ENCODE measurements at regions of chr16 and their contacts with region 1.

Region 1: GRCh38 chr16:82192665-82193064 is 22.6 kb upstream of the MPHOSPH6 start:
- DNase-seq: no peak
- ATAC-seq: peak; percentile 61

Region 2: DNA sequence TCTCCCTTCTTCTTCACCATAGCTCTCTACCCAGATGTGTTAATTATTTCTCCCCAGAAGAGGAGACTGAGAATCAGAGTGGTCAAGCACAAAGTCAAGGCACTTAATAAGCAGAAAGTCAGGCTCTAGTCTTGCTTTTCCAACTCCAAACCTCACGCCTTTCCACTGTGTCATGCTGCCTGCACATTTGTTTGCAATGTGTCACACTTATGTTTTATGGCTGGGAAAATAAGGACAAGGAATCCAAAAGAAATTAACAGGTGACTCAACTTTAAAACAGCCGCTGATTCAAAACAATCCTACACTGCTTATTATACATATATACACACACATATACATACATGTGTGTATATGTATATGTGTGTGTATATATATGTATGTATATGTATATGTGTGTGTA is 1907.6 kb before region 1 on chr16:
- intact Hi-C with region 1: loop called (anchors 10 kb)
- DNase-seq: no peak
- ATAC-seq: no peak

Region 3: DNA sequence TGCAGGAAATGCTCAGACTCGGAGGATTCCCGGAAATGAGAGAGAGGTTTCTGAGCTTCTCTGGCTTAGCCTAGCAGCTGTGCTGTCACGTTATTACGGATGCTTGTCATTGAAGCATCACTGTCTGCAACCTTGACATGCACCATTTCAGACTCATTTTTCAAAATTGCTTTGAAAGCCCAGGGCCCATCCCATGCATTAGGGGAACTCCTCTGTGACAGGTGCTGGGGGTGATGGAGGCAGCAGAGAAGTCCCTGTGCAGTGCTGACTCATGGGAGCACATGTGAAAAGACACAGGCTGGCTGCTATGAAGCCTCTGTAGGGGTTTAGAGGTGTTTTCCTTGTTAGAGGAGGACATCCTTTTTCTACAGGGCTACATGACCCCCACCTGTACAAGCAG is 191.4 kb after region 1 on chr16:
- intact Hi-C with region 1: no loop called
- DNase-seq: no peak
- ATAC-seq: no peak

Measured in sciatic nerve (tissue), 2 donors.